Heart left ventricle (tissue), 16 donors: ENCODE measurements at regions of chr9 and their contacts with region 1.

Region 1: DNA sequence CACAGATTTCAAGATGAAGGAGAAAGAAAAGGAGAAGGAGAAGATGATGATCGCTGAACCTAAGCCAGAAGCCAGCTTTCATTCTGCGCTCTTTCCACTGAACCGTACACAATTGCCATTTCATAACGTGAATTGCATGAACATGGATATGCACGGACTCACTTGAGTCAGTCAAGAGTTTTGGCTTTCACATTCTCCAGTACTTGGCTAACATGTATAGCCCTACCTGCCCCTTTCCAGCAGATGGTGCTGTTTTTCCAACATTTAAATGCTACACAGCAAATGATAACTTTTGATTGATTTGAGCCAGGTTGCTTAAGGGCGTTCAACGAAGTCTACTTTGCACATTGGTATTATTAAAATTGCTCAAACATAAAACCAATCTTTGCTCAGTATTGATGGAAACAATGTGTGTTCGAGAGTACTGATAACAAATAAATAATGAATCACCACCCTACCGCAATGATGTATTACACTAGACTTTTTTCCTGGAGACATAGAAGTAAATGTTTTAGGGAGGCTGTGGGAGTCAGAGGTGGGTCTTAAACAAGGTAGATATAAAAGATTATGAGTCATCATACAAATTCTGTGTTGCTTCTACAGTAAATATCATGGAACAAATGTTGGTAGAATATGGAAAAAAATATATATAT is 196.4 kb downstream of the TRPM3 start:
- DNase-seq: peak in 3 of 5 donors; percentile 14 to 20 (median 19)
- ATAC-seq: peak; percentile 55 to 92 (median 88)
- H3K4me3 ChIP-seq: peak overlapping the region in 8 of 12 donors; percentile 2 to 41 (median 13)
- H3K27ac ChIP-seq: no peak overlapping the region
- H3K4me1 ChIP-seq: peaks cover 0 to 3% (median 0%) of the 10 kb centered on the region in 12 donors
- H3K27me3 ChIP-seq: no peaks in the 10 kb centered on the region
- CTCF ChIP-seq: peak; percentile 48 to 85 (median 70)
- POLR2A ChIP-seq: no peak

Region 2: GRCh38 chr9:71001780-71002386 is 76.9 kb after region 1 on chr9:
- intact Hi-C with region 1: loop called in 1 of 10 experiments (anchors 10 kb)
- DNase-seq: no peak
- ATAC-seq: no peak
- H3K4me3 ChIP-seq: no peak overlapping the region
- H3K27ac ChIP-seq: no peak overlapping the region
- H3K4me1 ChIP-seq: no peaks in the 10 kb centered on the region
- H3K27me3 ChIP-seq: no peaks in the 10 kb centered on the region
- CTCF ChIP-seq: peak in 11 of 12 donors; percentile 18 to 55 (median 42)
- POLR2A ChIP-seq: no peak

Region 3: GRCh38 chr9:71249729-71250317 is 324.8 kb after region 1 on chr9:
- intact Hi-C with region 1: loop called in 9 of 10 experiments (anchors 2 to 10 kb)
- DNase-seq: peak in 1 of 5 donors; percentile 9
- ATAC-seq: peak in 3 of 4 donors; percentile 49 to 78 (median 57)
- H3K4me3 ChIP-seq: no peak overlapping the region
- H3K27ac ChIP-seq: no peak overlapping the region
- H3K4me1 ChIP-seq: no peaks in the 10 kb centered on the region
- H3K27me3 ChIP-seq: peaks cover 0 to 14% (median 0%) of the 10 kb centered on the region in 9 donors
- CTCF ChIP-seq: peak; percentile 36 to 87 (median 65)
- POLR2A ChIP-seq: no peak